ENCODE measurements at regions of chr16 and their contacts with region 1.

Region 1: GRCh38 chr16:2023098-2023925 is 3.4 kb upstream of the NHERF2 start:
- DNase-seq: peak; percentile 92 to 97 (median 94)
- ATAC-seq: peak; percentile 85 to 93 (median 86)
- H3K4me3 ChIP-seq: peak overlapping the region in 10 of 12 donors; percentile 3 to 47 (median 42)
- H3K27ac ChIP-seq: peak overlapping the region; percentile 39 to 97 (median 82)
- H3K4me1 ChIP-seq: peaks cover 0 to 65% (median 50%) of the 10 kb centered on the region in 12 donors
- H3K27me3 ChIP-seq: peaks cover 10 to 47% (median 32%) of the 10 kb centered on the region in 9 donors
- CTCF ChIP-seq: peak; percentile 90 to 99 (median 96)
- POLR2A ChIP-seq: peak in 1 of 2 donors; percentile 81

Region 2: DNA sequence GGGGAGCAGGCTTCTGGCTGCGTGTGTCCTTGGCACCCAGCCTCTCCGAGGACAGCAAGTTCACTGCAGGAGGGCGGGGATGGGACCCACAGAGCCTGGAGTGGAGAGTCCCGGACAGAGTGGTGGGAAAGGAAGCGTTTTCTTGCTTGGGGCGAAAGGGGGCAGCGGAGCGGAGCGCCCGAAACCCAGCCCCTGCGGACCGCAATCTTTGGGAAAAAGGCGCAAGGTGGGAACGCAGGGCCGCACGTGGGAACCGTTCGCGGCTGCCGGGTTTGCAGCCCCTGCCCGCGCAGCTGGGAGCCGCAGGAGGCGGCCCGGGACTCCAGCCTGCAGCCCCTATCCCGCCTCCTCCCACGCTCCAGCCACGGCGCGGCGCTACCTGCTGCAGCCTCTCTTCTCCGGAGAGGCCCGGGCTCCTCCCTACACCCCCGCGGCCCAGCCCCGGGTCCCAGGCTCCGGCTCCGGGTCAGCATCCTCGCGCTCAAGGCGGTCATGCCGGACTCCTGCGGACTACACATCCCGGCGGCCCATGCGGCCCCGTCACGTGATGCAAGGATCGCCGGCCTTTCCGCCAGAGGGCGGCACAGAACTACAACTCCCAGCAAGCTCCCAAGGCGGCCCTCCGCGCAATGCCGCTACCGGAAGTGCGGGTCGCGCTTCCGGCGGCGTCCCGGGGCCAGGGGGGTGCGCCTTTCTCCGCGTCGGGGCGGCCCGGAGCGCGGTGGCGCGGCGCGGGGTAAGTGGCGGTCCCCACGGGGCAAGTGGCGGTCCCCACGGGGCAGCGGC is 24.2 kb after region 1 on chr16 and contains the starts of genes NTHL1 and TSC2:
- intact Hi-C with region 1: loop called in 5 of 10 experiments (anchors 1 to 5 kb)
- DNase-seq: peak; percentile 97 to 98 (median 98)
- ATAC-seq: peak; percentile 82 to 94 (median 92)
- H3K4me3 ChIP-seq: peak within 1 kb of the TSS; percentile 71 to 99 (median 91)
- H3K27ac ChIP-seq: peak within 1 kb of the TSS; percentile 36 to 94 (median 86)
- H3K4me1 ChIP-seq: peaks cover 14 to 61% (median 47%) of the 10 kb centered on the region in 12 donors
- H3K27me3 ChIP-seq: no peaks in the 10 kb centered on the region
- CTCF ChIP-seq: peak; percentile 24 to 78 (median 54)
- POLR2A ChIP-seq: peak in 1 of 2 donors; percentile 77
- total RNA-seq, gene NTHL1: 9.0 to 25.0 (median 11.7) TPM
- total RNA-seq, gene TSC2: 48.4 to 94.5 (median 70.4) TPM

Region 3: DNA sequence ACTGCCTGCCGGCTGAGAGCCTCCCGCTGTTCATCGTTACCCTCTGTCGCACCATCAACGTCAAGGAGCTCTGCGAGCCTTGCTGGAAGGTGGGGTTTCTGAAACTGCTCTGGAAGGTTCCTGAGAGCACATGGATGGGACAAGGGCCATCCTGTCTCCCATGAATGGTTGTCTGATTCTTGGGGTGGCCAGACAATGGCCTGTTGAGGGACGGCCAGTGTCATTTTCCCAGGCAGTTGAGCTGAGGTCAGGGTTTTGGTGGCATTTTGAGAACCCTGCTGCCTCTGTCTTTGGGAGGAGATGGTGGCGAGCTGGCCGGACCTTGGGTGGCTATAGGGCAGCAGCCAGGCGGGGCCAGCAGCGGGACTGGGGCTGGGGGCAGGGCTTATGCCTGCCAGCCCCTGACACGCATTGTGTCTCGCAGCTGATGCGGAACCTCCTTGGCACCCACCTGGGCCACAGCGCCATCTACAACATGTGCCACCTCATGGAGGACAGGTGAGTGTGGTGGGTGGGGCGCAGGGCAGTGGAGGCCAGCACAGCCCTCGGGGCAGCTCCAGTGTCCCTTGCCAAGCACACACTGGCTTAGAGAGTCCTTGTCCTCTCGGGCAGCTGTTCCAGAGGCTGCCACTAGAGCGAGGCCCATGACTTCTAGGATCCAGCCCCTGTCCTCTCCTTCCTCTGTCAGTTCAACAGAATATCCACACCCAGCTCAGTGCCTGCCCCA is 33.5 kb after region 1 on chr16:
- intact Hi-C with region 1: loop called in 4 of 10 experiments (anchors 2 to 5 kb)
- DNase-seq: no peak
- ATAC-seq: peak in 2 of 4 donors; percentile 23 to 84
- H3K4me3 ChIP-seq: no peak overlapping the region
- H3K27ac ChIP-seq: no peak overlapping the region
- H3K4me1 ChIP-seq: no peaks in the 10 kb centered on the region
- H3K27me3 ChIP-seq: no peaks in the 10 kb centered on the region
- CTCF ChIP-seq: peak in 1 of 12 donors; percentile 17
- POLR2A ChIP-seq: no peak

Region 4: GRCh38 chr16:2082160-2082982 is 59.1 kb after region 1 on chr16:
- intact Hi-C with region 1: loop called in 3 of 10 experiments (anchors 5 to 10 kb)
- DNase-seq: peak in 2 of 5 donors; percentile 65 to 68
- ATAC-seq: peak; percentile 35 to 74 (median 49)
- H3K4me3 ChIP-seq: no peak overlapping the region
- H3K27ac ChIP-seq: peak overlapping the region in 11 of 12 donors; percentile 9 to 75 (median 51)
- H3K4me1 ChIP-seq: peaks cover 5 to 32% (median 22%) of the 10 kb centered on the region in 12 donors
- H3K27me3 ChIP-seq: no peaks in the 10 kb centered on the region
- CTCF ChIP-seq: peak in 3 of 12 donors; percentile 10 to 11 (median 11)
- POLR2A ChIP-seq: no peak

Region 5: GRCh38 chr16:2142942-2143877 is 119.9 kb after region 1 on chr16:
- intact Hi-C with region 1: loop called in 9 of 10 experiments (anchors 1 to 2 kb)
- DNase-seq: no peak
- ATAC-seq: no peak
- H3K4me3 ChIP-seq: no peak overlapping the region
- H3K27ac ChIP-seq: no peak overlapping the region
- H3K4me1 ChIP-seq: peaks cover 0 to 18% (median 11%) of the 10 kb centered on the region in 12 donors
- H3K27me3 ChIP-seq: no peaks in the 10 kb centered on the region
- CTCF ChIP-seq: no peak
- POLR2A ChIP-seq: no peak